K562 (cell line): ENCODE measurements at regions of chr11 and their contacts with region 1.

Region 1: DNA sequence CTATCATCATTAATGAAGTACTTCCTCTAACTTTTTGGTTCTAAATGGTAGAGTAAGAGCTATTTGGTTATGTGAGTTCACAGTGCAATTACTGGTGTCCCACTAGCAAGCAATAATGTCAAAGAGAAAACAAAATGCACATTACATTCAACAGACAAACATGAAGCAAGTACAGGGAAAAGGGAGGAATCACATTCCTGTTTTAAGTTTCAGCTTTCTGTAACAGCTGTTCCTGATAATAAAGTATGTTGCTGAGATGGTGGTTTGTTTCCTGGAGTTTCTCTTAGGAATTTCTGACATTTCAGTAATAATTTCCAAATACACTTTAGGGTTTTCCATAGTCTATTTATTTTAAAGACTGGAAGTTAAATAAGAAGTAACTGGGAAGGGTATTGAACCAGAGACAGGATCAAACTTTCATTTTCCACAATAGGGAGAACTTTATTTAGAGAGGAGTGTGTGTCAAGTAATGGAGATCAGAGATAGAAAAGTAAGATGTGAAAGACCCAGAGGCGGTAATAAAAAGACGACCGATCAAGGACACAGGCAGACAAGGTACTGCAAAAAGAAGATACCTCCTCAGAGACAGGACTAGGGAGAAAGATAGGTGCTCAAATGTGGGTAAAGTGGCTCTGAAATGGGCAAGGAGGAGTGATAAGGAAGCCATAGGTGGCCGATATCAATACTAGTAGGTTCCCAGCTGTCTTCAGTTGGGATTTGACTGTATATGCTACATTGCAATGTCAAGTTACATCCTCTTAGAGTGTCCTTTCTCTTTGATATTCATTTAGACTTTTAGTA is 20.8 kb upstream of the CLNS1A start:
- DNase-seq: peak; percentile 19 to 40 (median 25)
- ATAC-seq: peak; percentile 47
- H3K4me3 ChIP-seq: no peak overlapping the region
- H3K27ac ChIP-seq: no peak overlapping the region
- H3K4me1 ChIP-seq: peaks cover 3 to 8% of the 10 kb centered on the region in 2 experiments; a peak in 3 of 5 replicates
- H3K27me3 ChIP-seq: no peaks in the 10 kb centered on the region
- CTCF ChIP-seq: no peak
- EP300 ChIP-seq: no peak
- POLR2A ChIP-seq: no peak
- RAD21 ChIP-seq: no peak

Region 2: DNA sequence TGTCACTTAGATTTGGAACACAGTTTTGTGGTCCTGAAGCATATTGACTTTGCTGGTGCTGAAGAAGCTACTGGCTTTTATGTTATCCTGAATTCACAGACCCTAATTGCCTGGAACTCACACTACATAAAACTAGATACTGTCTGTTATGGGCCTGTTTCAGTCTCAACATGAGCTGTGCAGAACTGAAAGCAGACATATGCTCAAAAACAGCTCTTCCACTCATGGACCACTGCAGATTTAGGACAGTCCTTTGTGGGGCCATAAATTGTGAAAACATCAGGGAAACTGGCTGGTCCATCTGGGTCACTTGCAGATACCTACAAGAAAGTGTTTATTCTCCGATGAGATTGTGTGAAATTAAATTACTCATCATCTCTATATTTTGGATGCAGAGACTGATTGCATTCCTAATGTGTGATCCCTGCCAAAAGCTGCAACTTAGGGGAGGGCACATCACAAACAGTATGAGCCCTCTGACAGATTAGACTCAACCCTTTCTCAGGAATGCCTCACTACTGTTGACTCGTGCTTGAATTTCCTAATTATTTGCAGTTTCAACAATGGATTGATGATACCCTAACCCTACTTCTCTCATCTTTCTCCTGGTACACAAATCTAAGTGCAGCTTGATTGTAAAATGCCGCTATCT is 10.6 kb before region 1 on chr11:
- CTCF ChIA-PET with region 1: no interaction called
- POLR2A ChIA-PET with region 1: interaction called, 13 read pairs
- in situ Hi-C with region 1: no loop called
- intact Hi-C with region 1: no loop called
- DNase-seq: no peak
- ATAC-seq: no peak
- H3K4me3 ChIP-seq: no peak overlapping the region
- H3K27ac ChIP-seq: no peak overlapping the region
- H3K4me1 ChIP-seq: peaks cover 9 to 26% of the 10 kb centered on the region in 2 experiments; a peak in 3 of 5 replicates
- H3K27me3 ChIP-seq: no peaks in the 10 kb centered on the region
- CTCF ChIP-seq: no peak
- EP300 ChIP-seq: no peak
- POLR2A ChIP-seq: no peak
- RAD21 ChIP-seq: no peak

Region 3: GRCh38 chr11:78595436-78596130 is 937.2 kb after region 1 on chr11:
- CTCF ChIA-PET with region 1: no interaction called
- POLR2A ChIA-PET with region 1: no interaction called
- in situ Hi-C with region 1: no loop called
- intact Hi-C with region 1: no loop called
- DNase-seq: no peak
- ATAC-seq: no peak; the same call in 2 of the 3 replicates
- H3K4me3 ChIP-seq: no peak overlapping the region
- H3K27ac ChIP-seq: no peak overlapping the region
- H3K4me1 ChIP-seq: peaks cover 0 to 19% of the 10 kb centered on the region in 2 experiments; a peak in 2 of 5 replicates
- H3K27me3 ChIP-seq: 0 out of 5 replicates have a peak, but pooled peaks cover 0 to 4% of the 10 kb centered on the region in 2 experiments
- CTCF ChIP-seq: no peak
- EP300 ChIP-seq: no peak
- POLR2A ChIP-seq: no peak
- RAD21 ChIP-seq: no peak